B cell (primary cell): ENCODE measurements at regions of chr9 and their contacts with region 1.

Region 1: DNA sequence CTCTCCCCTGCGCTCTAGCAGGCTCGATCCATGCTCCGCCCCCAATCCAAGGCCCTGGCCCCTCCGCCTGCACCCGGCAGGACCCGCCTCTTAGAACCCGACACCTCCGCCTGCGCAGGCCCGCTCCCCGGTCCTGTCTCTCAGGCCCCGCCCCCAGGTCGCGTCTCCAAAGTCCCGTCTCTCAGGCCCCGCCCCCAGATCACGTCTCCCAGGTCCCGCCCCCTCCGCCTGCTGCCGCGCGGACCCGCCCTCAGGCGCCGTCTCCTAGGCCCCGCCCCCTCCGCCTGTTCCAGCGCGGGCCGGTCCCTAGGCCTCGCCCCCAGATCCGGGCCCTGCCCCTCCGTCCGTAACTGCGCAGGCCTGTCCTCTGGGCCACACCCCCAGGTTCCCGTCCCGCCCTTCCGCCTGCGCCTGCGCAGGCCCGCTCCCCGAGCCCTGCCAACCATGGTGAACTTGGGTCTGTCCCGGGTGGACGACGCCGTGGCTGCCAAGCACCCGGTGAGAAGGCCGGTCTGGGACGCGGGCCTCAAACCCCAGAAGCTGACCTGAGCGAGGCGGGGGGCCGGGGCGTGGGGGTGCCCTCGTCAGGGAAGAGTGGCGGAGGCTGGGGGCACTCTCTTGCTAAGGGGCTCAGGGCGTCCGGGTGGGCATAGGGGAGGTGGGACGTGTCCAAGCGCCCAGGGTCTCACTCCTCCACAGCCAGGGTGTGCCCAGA is at the start of gene TMEM141:
- DNase-seq: peak; percentile 99
- ATAC-seq: peak; percentile 84
- H3K4me3 ChIP-seq: peak within 1 kb of the TSS in 4 of 5 experiments; percentile 69 to 84 (median 80)
- H3K4me3 Mint-ChIP-seq: peak within 1 kb of the TSS; percentile 87
- H3K27ac ChIP-seq: peak within 1 kb of the TSS; percentile 97 to 99
- H3K27ac Mint-ChIP-seq: peak within 1 kb of the TSS; percentile 95
- H3K4me1 ChIP-seq: peaks cover 18 to 27% of the 10 kb centered on the region in 2 donors
- H3K4me1 Mint-ChIP-seq: peaks cover 23% of the 10 kb centered on the region
- H3K27me3 ChIP-seq: no peaks in the 10 kb centered on the region
- H3K27me3 Mint-ChIP-seq: peaks cover under 1% of the 10 kb centered on the region
- CTCF ChIP-seq: no peak
- total RNA-seq, gene TMEM141: 35.7 and 39.1 TPM in 2 replicates

Region 2: GRCh38 chr9:136655536-136656182 is 135.4 kb before region 1 on chr9:
- CTCF ChIA-PET with region 1: no interaction called
- POLR2A ChIA-PET with region 1: no interaction called
- intact Hi-C with region 1: no loop called
- DNase-seq: no peak
- ATAC-seq: no peak
- H3K4me3 ChIP-seq: no peak overlapping the region
- H3K4me3 Mint-ChIP-seq: no peak overlapping the region
- H3K27ac ChIP-seq: no peak overlapping the region
- H3K27ac Mint-ChIP-seq: no peak overlapping the region
- H3K4me1 ChIP-seq: peaks cover 51 to 54% of the 10 kb centered on the region in 2 donors
- H3K4me1 Mint-ChIP-seq: peaks cover 32% of the 10 kb centered on the region
- H3K27me3 ChIP-seq: peaks cover 0 to 83% (median 53%) of the 10 kb centered on the region in 4 experiments
- H3K27me3 Mint-ChIP-seq: peaks cover 45% of the 10 kb centered on the region
- CTCF ChIP-seq: no peak

Region 3: DNA sequence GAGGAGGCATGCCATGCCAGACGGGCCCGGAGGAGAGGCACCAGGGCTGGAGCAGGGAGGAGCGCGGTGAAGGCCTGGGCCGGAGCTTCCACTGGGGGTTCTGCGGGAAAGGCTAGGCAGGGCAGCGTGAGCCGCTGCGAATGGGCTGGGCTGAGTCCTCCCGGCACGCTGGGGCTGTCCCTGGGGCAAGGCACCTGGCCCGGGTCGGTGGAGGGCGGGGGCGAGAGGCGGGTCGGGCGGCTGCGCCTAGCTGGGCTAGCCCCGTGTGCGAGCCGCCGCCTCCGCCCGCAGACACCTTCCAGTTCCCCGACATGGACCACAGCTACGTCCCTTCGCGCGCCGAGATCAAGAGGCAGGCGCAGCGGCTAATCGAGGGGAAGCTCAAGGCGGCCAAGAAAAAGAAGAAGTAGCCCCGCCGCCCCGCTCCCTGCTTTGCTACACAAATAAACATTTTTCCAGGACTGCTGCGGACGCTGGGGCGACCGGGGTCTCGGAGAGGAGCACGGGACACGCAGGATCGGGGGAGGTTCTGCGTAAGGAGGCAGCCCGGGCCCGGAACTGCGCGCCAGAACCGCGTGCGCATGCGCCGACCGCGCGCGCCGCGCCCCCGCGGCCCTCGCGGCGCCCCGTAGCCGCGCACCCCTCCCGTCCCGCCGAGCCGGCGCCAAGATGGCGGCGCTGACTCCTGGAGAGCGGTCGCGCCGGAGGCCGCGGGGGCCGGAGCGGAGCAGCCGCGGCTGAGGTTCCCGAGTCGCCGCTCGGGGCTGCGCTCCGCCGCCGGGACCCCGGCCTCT is 16.4 kb after region 1 on chr9 and contains the start of gene RABL6:
- CTCF ChIA-PET with region 1: interaction called, 14 read pairs
- POLR2A ChIA-PET with region 1: interaction called, 5 read pairs
- intact Hi-C with region 1: loop called (anchors 1 kb)
- DNase-seq: peak; percentile 93
- ATAC-seq: peak; percentile 86
- H3K4me3 ChIP-seq: peak within 1 kb of the TSS; percentile 42 to 97 (median 76)
- H3K4me3 Mint-ChIP-seq: peak within 1 kb of the TSS; percentile 89
- H3K27ac ChIP-seq: peak within 1 kb of the TSS; percentile 84
- H3K27ac Mint-ChIP-seq: peak within 1 kb of the TSS; percentile 95
- H3K4me1 ChIP-seq: peaks cover 19 to 21% of the 10 kb centered on the region in 2 donors
- H3K4me1 Mint-ChIP-seq: peaks cover 31% of the 10 kb centered on the region
- H3K27me3 ChIP-seq: no peaks in the 10 kb centered on the region
- H3K27me3 Mint-ChIP-seq: no peaks in the 10 kb centered on the region
- CTCF ChIP-seq: no peak
- total RNA-seq, gene RABL6: 70.5 and 72.3 TPM in 2 replicates

Region 4: GRCh38 chr9:136944519-136945279 is 153.6 kb after region 1 on chr9 and contains the starts of genes C8G and FBXW5:
- CTCF ChIA-PET with region 1: interaction called, 4 read pairs
- POLR2A ChIA-PET with region 1: no interaction called
- intact Hi-C with region 1: loop called (anchors 2 kb)
- DNase-seq: peak; percentile 96
- ATAC-seq: peak; percentile 91
- H3K4me3 ChIP-seq: peak within 1 kb of the TSS; percentile 47 to 72 (median 63)
- H3K4me3 Mint-ChIP-seq: peak within 1 kb of the TSS; percentile 80
- H3K27ac ChIP-seq: peak within 1 kb of the TSS in 1 of 2 donors; percentile 48
- H3K27ac Mint-ChIP-seq: peak within 1 kb of the TSS; percentile 87
- H3K4me1 ChIP-seq: peaks cover 11 to 22% of the 10 kb centered on the region in 2 donors
- H3K4me1 Mint-ChIP-seq: peaks cover 12% of the 10 kb centered on the region
- H3K27me3 ChIP-seq: no peaks in the 10 kb centered on the region
- H3K27me3 Mint-ChIP-seq: no peaks in the 10 kb centered on the region
- CTCF ChIP-seq: peak; percentile 90
- total RNA-seq, gene C8G: 1.7 and 2.8 TPM in 2 replicates
- total RNA-seq, gene FBXW5: 99.6 and 102 TPM in 2 replicates

Region 5: DNA sequence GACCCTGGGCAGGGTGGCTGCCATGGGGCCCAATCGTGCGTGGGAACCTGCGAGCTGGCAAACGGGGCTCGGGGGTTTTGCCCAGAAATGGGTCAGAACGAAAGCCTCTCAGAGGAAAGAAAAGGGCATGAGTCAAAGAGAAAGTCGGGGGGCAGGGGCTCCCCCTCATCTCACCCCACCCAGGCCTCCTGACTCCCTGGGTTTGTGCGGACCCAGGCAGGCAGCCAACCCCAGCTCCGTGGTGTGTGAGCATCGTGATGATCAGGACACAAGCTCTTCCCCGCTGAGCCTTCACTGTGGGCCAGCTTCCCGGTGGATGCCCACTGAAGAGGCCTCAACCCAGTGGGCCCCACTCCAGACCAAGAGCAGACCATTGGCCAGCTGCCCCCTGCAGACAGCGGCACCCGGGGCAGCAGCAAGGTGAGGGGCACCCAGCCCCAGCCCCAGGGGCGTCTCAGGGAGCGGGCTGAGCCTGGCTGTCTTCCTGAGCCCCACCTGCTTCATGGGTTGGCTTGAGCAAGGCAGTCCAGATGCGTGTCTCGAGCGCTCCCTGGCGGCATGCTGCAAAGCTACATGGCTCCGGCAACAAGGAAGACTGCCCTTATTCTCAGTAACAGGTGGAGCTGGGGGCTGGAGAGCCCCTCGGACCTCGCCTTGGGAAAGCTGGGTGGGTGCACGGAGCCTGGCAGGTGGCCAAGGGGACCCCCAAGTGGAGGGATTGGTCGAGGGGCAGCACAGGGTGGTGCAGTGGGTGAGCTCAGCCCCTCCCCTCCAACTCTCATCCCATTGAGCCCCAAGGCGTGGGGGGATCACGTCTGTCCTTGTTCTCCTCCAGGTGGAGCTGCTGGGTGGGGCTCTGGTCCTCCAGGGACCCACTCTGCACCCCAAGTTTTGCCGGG is 244.0 kb after region 1 on chr9:
- CTCF ChIA-PET with region 1: interaction called, 106 read pairs
- POLR2A ChIA-PET with region 1: interaction called, 3 read pairs
- intact Hi-C with region 1: loop called (anchors 1 kb)
- DNase-seq: peak; percentile 91
- ATAC-seq: peak; percentile 64
- H3K4me3 ChIP-seq: peak overlapping the region in 4 of 5 experiments; percentile 8 to 37 (median 22)
- H3K4me3 Mint-ChIP-seq: peak overlapping the region; percentile 79
- H3K27ac ChIP-seq: peak overlapping the region; percentile 36 to 47
- H3K27ac Mint-ChIP-seq: peak overlapping the region; percentile 86
- H3K4me1 ChIP-seq: peaks cover 49 to 53% of the 10 kb centered on the region in 2 donors
- H3K4me1 Mint-ChIP-seq: peaks cover 45% of the 10 kb centered on the region
- H3K27me3 ChIP-seq: peaks cover 0 to 6% (median 0%) of the 10 kb centered on the region in 4 experiments
- H3K27me3 Mint-ChIP-seq: no peaks in the 10 kb centered on the region
- CTCF ChIP-seq: peak; percentile 90

Region 6: GRCh38 chr9:137086531-137087408 is 295.7 kb after region 1 on chr9 and contains the start of gene MAN1B1:
- CTCF ChIA-PET with region 1: interaction called, 4 read pairs
- POLR2A ChIA-PET with region 1: no interaction called
- intact Hi-C with region 1: loop called (anchors 1 kb)
- DNase-seq: peak; percentile 100
- ATAC-seq: peak; percentile 79
- H3K4me3 ChIP-seq: peak within 1 kb of the TSS; percentile 42 to 83 (median 74)
- H3K4me3 Mint-ChIP-seq: peak within 1 kb of the TSS; percentile 97
- H3K27ac ChIP-seq: peak within 1 kb of the TSS; percentile 88 to 97
- H3K27ac Mint-ChIP-seq: peak within 1 kb of the TSS; percentile 98
- H3K4me1 ChIP-seq: peaks cover 18 to 41% of the 10 kb centered on the region in 2 donors
- H3K4me1 Mint-ChIP-seq: peaks cover 40% of the 10 kb centered on the region
- H3K27me3 ChIP-seq: no peaks in the 10 kb centered on the region
- H3K27me3 Mint-ChIP-seq: no peaks in the 10 kb centered on the region
- CTCF ChIP-seq: no peak
- total RNA-seq, gene MAN1B1: 68.4 and 80.9 TPM in 2 replicates

Region 7: DNA sequence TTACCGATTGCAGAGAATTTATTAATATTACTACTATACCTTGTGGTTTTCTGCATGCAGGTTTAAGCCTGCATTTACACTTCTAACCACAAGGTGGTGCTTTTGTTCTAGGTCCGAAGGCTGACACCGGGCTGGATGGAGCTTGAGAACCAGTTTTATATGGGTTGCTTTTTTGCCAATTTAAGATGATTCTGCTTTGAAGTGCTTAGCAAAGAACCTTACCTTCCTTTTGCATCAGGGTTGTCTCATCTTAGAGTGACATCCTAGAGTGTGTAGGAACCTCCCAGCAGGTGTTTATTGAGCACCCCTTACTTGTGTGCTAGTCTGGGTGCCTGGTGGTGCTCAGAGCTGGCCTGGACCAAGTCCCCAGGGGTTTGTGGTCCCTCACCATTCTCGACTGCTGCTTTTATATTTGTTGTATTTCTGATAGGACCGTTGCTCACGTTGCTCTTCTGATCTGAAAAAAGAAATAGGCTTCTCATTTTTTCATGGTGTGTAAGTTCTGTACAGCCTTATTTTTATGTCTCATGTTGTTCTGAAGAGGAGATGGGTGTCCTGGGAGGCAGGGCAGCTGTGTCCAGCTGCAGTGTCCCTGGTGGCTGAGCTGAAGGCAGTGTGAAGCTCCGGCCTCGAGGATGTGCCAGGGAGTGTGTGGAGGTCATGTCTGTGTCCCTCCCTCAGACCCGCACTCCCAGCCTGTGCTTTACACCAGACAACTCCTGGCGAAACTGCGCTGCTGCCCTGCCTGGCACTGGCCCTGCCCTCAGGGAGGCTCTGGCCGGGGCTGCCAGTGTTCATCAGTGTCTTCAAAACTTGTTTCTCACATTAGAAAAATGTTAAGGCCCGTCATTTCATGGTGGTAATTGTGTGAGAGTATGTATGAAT is 882.1 kb after region 1 on chr9:
- CTCF ChIA-PET with region 1: no interaction called
- POLR2A ChIA-PET with region 1: no interaction called
- intact Hi-C with region 1: no loop called
- DNase-seq: peak; percentile 85
- ATAC-seq: peak; percentile 97
- H3K4me3 ChIP-seq: no peak overlapping the region
- H3K4me3 Mint-ChIP-seq: peak overlapping the region; percentile 59
- H3K27ac ChIP-seq: peak overlapping the region; percentile 44 to 61
- H3K27ac Mint-ChIP-seq: peak overlapping the region; percentile 86
- H3K4me1 ChIP-seq: peaks cover 29 to 35% of the 10 kb centered on the region in 2 donors
- H3K4me1 Mint-ChIP-seq: peaks cover 57% of the 10 kb centered on the region
- H3K27me3 ChIP-seq: no peaks in the 10 kb centered on the region
- H3K27me3 Mint-ChIP-seq: no peaks in the 10 kb centered on the region
- CTCF ChIP-seq: peak; percentile 87